A549 (cell line): ENCODE measurements at regions of chr16 and their contacts with region 1.

Region 1: DNA sequence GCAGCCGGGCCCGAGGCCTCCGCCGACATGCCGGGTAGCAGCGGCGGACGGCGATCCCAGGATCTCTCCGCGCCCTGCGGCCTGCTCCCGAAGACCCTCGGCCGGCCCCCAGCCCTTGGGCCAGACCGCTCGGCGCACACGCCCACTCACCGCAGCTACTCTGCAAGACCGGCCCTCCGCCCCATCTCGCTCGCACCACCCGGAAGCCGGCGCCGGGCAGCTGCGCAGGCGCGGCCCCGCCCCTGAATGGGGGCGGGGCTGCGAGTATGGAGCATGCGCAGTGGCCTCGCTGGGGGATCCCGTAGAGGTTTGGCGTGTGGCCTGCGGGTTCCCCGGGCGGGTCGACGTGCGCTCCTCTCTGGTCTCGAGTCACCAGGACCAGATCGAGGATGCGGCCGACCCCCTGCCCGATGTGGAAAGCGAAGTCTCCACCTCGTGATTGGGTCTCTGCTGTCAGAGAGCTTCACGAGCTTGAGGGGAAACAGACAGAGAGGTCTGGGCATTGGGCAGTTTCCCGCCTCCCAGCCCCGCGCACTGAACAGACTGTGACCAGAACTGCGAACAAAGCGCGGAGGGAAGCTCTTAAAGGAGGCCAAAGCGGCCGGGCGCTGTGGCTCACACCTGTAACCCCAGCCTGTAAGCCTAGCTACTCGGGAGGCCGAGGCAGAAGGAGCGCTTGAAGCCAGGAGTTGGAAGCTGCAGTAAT is at the start of gene KCTD13:
- DNase-seq: peak; percentile 77 to 97
- ATAC-seq: peak; percentile 87 to 97
- H3K4me3 ChIP-seq: peak within 1 kb of the TSS; percentile 97
- H3K27ac ChIP-seq: peak within 1 kb of the TSS; percentile 96 to 98
- H3K4me1 ChIP-seq: peaks cover 19% of the 10 kb centered on the region
- CTCF ChIP-seq: no peak
- EP300 ChIP-seq: no peak
- POLR2A ChIP-seq: peak; percentile 96
- RAD21 ChIP-seq: peak in 1 of 2 experiments; percentile 43; a peak in 2 of 5 replicates
- polyA plus RNA-seq, gene KCTD13: 14.6 and 15.3 TPM in 2 replicates

Region 2: DNA sequence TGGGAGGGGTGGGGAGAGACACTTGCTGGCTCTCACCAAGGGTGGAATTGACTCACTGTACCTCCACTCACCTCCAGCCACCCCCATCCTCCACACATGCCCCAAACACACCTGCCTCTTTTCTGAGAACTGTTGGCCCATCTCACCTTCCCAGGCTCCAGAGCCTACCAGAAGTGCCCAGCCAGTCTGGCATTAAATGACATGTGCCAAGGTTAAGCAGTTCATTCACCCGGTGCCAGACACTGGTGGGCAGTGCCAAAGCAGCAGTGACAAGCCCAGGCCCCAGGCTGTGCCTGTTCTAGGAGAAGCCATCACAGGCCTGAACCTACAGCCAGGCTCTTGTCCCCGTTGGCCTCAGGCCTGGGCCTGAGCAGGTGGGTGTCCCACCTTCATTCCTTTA is 94.7 kb before region 1 on chr16:
- CTCF ChIA-PET with region 1: no interaction called
- POLR2A ChIA-PET with region 1: no interaction called
- DNase-seq: no peak
- ATAC-seq: no peak
- H3K4me3 ChIP-seq: no peak overlapping the region
- H3K27ac ChIP-seq: no peak overlapping the region
- H3K4me1 ChIP-seq: peaks cover 54% of the 10 kb centered on the region
- CTCF ChIP-seq: no peak
- EP300 ChIP-seq: no peak
- POLR2A ChIP-seq: no peak
- RAD21 ChIP-seq: no peak

Region 3: DNA sequence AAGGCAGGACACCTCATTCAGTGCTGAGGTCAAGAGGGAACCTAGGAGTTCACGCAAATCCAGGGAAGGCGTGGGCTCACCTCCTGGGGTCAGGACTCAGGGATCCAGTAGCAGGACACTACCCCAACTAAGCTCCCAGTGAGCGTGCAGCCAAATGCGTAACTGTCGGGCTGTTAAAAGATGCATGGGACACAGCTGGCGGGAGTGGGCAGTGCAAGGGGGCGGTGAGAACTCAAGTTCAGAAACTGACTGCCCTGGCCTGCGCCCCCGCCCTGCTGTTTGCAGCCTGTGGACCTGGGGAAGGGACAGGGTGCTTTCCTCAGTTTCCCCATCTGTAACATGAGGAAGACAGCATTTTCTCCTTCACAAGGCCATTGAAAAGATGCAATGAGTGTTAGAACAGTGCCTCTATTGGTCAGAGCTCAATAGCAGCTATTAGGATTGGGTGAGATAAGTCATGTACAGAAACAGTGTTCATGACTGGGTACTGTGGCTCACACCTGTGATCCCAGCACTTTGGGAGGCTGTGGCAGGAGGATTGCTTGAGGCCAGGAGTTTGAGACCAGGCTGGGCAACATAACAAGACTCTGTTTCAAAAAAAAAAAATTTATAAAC is 83.3 kb before region 1 on chr16:
- CTCF ChIA-PET with region 1: no interaction called
- POLR2A ChIA-PET with region 1: no interaction called
- DNase-seq: no peak
- ATAC-seq: peak; percentile 61 to 63; a peak in 3 of 6 replicates
- H3K4me3 ChIP-seq: no peak overlapping the region
- H3K27ac ChIP-seq: no peak overlapping the region
- H3K4me1 ChIP-seq: no peaks in the 10 kb centered on the region
- CTCF ChIP-seq: no peak
- EP300 ChIP-seq: no peak
- POLR2A ChIP-seq: no peak
- RAD21 ChIP-seq: no peak

Region 4: DNA sequence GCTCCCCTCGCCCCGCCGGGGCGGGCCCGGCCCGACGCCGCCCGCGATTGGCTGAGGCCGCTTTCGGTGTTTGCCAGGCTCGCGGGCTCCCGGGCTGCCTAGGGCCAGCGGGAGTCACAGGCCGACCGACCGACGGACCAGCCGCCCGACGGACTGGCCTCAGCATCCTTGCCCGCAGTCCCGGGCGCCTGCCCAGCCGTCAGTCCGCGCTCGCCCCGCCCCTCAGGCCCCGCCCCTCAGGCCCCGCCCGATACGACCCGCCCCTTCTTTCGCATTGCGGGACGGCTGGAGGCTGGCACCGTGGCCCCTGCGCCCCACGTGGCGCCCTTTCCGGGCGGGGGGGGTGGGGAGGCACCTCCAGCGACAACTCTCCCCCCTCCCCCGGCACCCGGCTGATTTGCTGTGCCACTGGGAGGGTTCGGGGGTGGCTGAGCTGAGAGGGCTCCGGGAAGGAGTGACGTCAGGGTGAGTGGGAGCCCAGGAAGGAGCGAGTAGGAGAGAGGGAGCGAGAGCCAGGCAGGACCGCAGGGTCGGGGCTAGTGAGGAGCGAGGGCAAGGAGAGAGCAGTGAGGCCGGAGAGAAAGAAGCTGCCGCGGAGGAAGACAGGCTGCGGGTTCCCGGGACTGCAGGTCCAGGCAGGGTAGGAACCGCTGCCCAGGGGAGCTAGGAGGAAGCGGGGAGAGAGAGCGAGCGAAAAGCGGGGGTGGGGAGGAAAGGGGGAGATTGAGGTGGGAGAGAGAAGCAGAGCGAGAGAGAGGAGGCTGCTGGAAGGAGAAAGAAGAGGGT is 25.9 kb before region 1 on chr16 and contains the start of gene ASPHD1:
- CTCF ChIA-PET with region 1: interaction called, 6 read pairs
- POLR2A ChIA-PET with region 1: interaction called, 12 read pairs
- DNase-seq: peak; percentile 77 to 87
- ATAC-seq: peak; percentile 73 to 79
- H3K4me3 ChIP-seq: peak within 1 kb of the TSS; percentile 68
- H3K27ac ChIP-seq: peak within 1 kb of the TSS; percentile 80 to 88
- H3K4me1 ChIP-seq: peaks cover 16% of the 10 kb centered on the region
- CTCF ChIP-seq: no peak
- EP300 ChIP-seq: no peak
- POLR2A ChIP-seq: no peak; the same call in 1 of the 2 replicates
- RAD21 ChIP-seq: no peak
- polyA plus RNA-seq, gene ASPHD1: 3.7 and 4.6 TPM in 2 replicates

Region 5: GRCh38 chr16:29943846-29944669 is 17.9 kb after region 1 on chr16:
- CTCF ChIA-PET with region 1: interaction called, 28 read pairs
- POLR2A ChIA-PET with region 1: interaction called, 42 read pairs
- DNase-seq: peak; percentile 85 to 99
- ATAC-seq: peak; percentile 98 to 99
- H3K4me3 ChIP-seq: peak overlapping the region; percentile 14
- H3K27ac ChIP-seq: peak overlapping the region; percentile 92 to 94
- H3K4me1 ChIP-seq: peaks cover 26% of the 10 kb centered on the region
- CTCF ChIP-seq: peak; percentile 64
- EP300 ChIP-seq: no peak; a peak in 1 of 5 replicates
- POLR2A ChIP-seq: peak; percentile 31
- RAD21 ChIP-seq: peak; percentile 47 to 56

Region 6: DNA sequence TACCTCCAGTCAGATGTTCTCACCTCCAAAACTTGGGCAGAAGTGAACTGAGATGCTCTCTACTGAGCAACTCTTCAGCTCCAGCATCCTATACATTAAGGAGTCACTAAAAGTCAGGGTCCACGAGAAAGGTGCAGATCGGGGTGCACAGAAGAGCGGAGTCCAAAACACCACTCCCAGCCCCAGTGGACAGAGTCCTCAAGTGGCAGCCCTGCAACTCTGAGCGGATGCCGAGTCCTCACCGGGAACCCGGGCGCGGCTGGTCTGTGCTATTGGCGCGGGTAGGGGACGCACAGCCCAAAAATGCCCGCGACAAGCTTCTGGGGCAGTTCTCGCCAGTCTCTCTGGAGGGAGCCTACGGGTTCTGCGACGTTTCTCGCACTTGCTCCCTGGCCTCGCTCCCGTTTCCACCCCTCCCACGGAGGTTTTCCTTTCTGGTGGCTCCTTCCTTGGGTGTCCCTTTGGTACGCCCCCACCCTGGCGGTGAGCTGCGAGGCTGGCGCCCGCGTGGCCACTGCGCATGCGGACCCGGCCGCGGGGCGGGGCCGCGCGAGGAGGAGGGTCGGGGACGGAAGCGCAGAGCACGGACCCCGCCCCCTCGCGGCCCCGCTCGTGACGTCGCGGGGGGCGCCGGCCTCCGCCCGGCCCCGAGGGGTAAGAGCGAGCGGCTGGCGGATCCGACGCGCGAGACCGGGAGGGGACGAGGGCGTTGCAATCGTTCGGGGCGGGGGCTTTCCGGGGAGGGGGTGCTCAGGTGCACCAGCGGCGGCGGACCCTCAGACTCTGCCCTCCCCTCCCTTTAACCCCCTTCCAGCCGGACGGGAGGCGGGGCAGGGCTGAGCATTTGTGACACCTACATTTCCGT is 35.6 kb after region 1 on chr16 and contains the start of gene TMEM219:
- CTCF ChIA-PET with region 1: interaction called, 11 read pairs
- POLR2A ChIA-PET with region 1: interaction called, 24 read pairs
- DNase-seq: peak; percentile 88 to 94
- ATAC-seq: peak; percentile 96 to 97
- H3K4me3 ChIP-seq: peak within 1 kb of the TSS; percentile 74
- H3K27ac ChIP-seq: peak within 1 kb of the TSS; percentile 86 to 96
- H3K4me1 ChIP-seq: peaks cover 12% of the 10 kb centered on the region; the same call in 1 of the 3 replicates
- CTCF ChIP-seq: no peak; the same call in 1 of the 3 replicates
- EP300 ChIP-seq: no peak
- POLR2A ChIP-seq: peak; percentile 53
- RAD21 ChIP-seq: peak in 1 of 2 experiments; percentile 47; a peak in 4 of 5 replicates
- polyA plus RNA-seq, gene TMEM219: 65.1 and 82.5 TPM in 2 replicates

Region 7: DNA sequence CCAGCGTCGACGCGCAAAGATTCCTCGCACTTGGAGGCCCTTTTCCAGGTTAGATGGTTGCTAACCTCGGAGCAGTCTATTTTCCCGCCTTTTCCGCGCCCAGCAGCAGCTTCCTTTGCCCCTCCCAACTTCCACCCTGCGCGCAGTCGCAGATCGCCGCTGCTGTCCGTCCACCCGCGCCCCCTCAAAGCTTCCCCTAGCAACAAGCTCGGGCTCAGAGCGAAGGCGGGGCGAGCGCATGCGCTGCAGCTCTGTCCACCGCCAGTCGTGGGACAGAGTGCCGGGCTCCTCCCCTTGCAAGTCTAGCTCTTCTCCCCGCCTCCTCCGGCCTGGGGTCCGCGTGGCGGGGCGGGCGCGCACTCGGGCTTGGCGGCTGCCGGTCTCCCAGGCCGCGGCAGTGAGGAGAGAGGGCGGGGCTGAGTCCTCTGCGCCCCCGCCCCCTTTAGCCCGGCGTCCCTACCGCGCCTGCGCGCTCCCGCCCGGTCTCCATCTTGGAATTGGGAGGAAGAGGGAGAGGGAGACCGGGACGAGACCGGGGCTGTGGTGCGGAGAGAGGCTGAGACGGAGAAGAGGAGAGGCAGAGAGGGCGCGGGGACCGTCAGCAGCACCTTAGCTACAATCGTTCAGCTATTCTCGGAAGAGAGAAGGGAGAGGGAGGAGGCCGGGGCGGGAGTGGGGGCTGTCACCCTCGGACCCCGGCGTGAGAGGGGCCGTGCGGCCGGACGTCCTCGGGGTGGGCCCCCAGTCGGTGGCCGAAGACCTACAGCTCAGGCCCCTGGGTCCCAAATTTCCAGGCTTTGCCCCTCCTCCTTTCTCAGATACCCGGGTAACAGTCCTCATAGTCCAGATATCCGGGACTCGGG is 47.5 kb after region 1 on chr16 and contains the start of gene TAOK2:
- CTCF ChIA-PET with region 1: interaction called, 6 read pairs
- POLR2A ChIA-PET with region 1: interaction called, 11 read pairs
- DNase-seq: peak; percentile 99 to 100
- ATAC-seq: peak; percentile 91 to 98
- H3K4me3 ChIP-seq: peak within 1 kb of the TSS; percentile 67
- H3K27ac ChIP-seq: peak within 1 kb of the TSS; percentile 90 to 98
- H3K4me1 ChIP-seq: peaks cover 19% of the 10 kb centered on the region
- CTCF ChIP-seq: no peak
- EP300 ChIP-seq: no peak
- POLR2A ChIP-seq: peak; percentile 96
- RAD21 ChIP-seq: peak in 1 of 2 experiments; percentile 16; a peak in 1 of 5 replicates
- polyA plus RNA-seq, gene TAOK2: 13.7 TPM in 2 replicates

Region 8: DNA sequence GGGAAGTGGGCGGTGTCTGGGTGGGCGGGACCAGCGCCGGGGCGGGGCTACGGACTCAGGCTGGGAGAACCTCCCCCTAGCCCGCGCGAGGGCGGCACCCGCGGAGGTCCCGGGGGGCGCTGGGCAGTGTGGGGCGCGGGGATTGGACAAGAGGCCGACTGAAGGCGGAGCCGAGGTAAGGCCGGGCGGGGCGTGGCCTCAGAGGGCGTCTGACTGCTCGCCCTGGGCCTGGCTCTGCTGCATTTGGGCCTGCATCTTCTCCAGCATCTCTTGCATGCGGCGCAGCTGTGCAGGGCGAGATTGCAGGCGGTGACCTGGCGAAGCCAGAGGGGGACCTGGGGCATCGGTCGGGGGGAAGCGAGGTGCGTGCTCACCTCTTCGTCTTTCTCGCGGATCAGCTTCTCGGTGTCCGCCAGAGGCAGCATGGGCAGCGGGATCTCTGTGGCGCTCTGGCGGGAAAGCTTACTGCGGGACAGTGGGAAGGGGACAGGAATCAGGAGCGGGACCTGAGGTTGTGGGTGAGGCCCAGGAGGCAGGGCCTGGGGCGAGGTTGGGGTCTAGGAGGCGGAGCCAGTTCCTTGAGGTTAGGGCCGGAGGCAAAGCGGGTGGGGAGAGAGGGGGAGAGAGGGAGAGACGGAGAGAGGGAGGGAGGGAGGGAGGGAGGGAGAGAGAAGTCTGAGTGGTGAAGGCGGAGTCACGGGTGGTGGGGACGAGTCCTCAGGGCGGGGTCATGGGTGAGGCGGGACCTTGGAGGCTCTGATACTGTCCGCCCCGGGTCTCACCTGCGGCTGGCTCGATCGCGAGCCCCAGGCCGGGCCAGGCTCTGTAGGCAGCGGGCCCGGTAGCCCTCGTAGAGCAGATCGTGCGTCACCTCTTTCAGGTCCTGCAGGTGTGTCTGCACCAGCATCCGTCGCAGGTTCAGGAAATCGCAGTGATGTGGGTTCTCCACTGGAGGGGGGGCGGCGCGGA is 452.4 kb after region 1 on chr16:
- CTCF ChIA-PET with region 1: no interaction called
- POLR2A ChIA-PET with region 1: no interaction called
- DNase-seq: peak; percentile 93 to 98
- ATAC-seq: peak; percentile 89 to 97
- H3K4me3 ChIP-seq: peak overlapping the region; percentile 84
- H3K27ac ChIP-seq: peak overlapping the region; percentile 93 to 96
- H3K4me1 ChIP-seq: peaks cover 12% of the 10 kb centered on the region
- CTCF ChIP-seq: no peak
- EP300 ChIP-seq: no peak
- POLR2A ChIP-seq: peak; percentile 81
- RAD21 ChIP-seq: no peak